H1 (cell line): ENCODE measurements at regions of chr19 and their contacts with region 1.

Region 1: DNA sequence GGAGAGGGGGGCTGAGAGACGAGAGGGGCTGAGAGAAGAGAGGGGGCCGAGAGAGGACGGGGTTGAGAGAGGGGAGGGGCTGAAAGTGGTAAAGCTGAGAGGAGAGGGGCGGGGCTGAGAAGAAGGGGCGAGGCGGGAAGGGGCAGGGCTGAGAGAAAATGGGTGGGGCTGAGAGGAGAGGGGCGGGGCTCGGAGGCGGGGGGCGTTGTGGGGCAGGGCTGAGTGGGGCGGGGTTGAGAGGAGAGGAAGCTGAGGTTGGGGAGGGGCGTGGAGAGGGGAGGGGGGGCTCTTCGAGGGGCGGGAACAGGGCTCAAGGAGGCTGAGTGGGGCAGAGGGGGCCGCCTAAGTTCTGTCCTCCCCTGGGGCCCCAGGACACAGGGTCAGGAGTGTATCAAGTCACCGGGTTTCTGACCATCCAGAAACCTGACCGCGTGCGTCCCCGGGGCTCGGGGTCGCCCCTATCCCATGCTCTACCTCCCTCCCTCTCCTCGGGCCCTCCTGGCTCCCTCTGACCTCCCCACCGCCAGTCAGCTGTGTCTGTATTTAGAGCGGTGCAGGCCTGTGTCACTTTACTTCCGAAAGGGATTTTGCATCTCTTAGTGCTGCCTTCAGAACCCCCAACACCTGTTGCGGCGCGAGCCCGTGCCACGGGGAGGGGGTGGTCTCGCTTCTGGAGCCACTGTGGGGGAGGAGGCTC is 38.6 kb upstream of the SEMA6B start:
- DNase-seq: peak in 1 of 2 experiments; percentile 91
- H3K4me3 ChIP-seq: peak overlapping the region; percentile 52 to 70 (median 54)
- H3K27ac ChIP-seq: no peak overlapping the region
- H3K4me1 ChIP-seq: peaks cover 0 to 9% (median 4%) of the 10 kb centered on the region in 4 experiments; a peak in 5 of 7 replicates
- H3K27me3 ChIP-seq: peaks cover 3 to 9% (median 8%) of the 10 kb centered on the region in 4 experiments; a peak in 6 of 7 replicates
- CTCF ChIP-seq: 0 out of 4 replicates have a peak, but pooled peaks of 1 of the 3 experiments have one; percentile 0
- EP300 ChIP-seq: no peak
- POLR2A ChIP-seq: no peak
- RAD21 ChIP-seq: no peak

Region 2: GRCh38 chr19:4455719-4456475 is 142.2 kb before region 1 on chr19:
- CTCF ChIA-PET with region 1: no interaction called
- POLR2A ChIA-PET with region 1: no interaction called
- DNase-seq: no peak
- H3K4me3 ChIP-seq: peak overlapping the region in 2 of 4 experiments; percentile 69 to 75; a peak in 1 of 8 replicates
- H3K27ac ChIP-seq: no peak overlapping the region
- H3K4me1 ChIP-seq: peaks cover 0 to 5% (median 2%) of the 10 kb centered on the region in 4 experiments; a peak in 4 of 7 replicates
- H3K27me3 ChIP-seq: no peaks in the 10 kb centered on the region
- CTCF ChIP-seq: no peak
- EP300 ChIP-seq: no peak
- POLR2A ChIP-seq: no peak
- RAD21 ChIP-seq: no peak

Region 3: GRCh38 chr19:4517451-4518057 is 80.6 kb before region 1 on chr19:
- CTCF ChIA-PET with region 1: no interaction called
- POLR2A ChIA-PET with region 1: no interaction called
- DNase-seq: no peak
- H3K4me3 ChIP-seq: no peak overlapping the region
- H3K27ac ChIP-seq: no peak overlapping the region
- H3K4me1 ChIP-seq: peaks cover 0 to 3% (median under 1%) of the 10 kb centered on the region in 4 experiments; a peak in 2 of 7 replicates
- H3K27me3 ChIP-seq: peaks cover 2 to 35% (median 25%) of the 10 kb centered on the region in 4 experiments; a peak in 6 of 7 replicates
- CTCF ChIP-seq: no peak
- EP300 ChIP-seq: no peak
- POLR2A ChIP-seq: no peak
- RAD21 ChIP-seq: no peak

Region 4: GRCh38 chr19:4624733-4625362 is 26.7 kb after region 1 on chr19:
- CTCF ChIA-PET with region 1: interaction called, 11 read pairs
- POLR2A ChIA-PET with region 1: no interaction called
- DNase-seq: no peak
- H3K4me3 ChIP-seq: no peak overlapping the region
- H3K27ac ChIP-seq: no peak overlapping the region
- H3K4me1 ChIP-seq: no peaks in the 10 kb centered on the region; a peak in 2 of 7 replicates
- H3K27me3 ChIP-seq: no peaks in the 10 kb centered on the region
- CTCF ChIP-seq: peak; percentile 54 to 67 (median 65)
- EP300 ChIP-seq: no peak
- POLR2A ChIP-seq: no peak
- RAD21 ChIP-seq: peak; percentile 19 to 35; a peak in 2 of 4 replicates